ENCODE measurements at regions of chr4 and their contacts with region 1.

Region 1: GRCh38 chr4:42513748-42514492 is 116.6 kb downstream of the SHISA3 start:
- DNase-seq: no peak
- H3K4me3 ChIP-seq: no peak overlapping the region
- CTCF ChIP-seq: no peak
- POLR2A ChIP-seq: no peak

Region 2: DNA sequence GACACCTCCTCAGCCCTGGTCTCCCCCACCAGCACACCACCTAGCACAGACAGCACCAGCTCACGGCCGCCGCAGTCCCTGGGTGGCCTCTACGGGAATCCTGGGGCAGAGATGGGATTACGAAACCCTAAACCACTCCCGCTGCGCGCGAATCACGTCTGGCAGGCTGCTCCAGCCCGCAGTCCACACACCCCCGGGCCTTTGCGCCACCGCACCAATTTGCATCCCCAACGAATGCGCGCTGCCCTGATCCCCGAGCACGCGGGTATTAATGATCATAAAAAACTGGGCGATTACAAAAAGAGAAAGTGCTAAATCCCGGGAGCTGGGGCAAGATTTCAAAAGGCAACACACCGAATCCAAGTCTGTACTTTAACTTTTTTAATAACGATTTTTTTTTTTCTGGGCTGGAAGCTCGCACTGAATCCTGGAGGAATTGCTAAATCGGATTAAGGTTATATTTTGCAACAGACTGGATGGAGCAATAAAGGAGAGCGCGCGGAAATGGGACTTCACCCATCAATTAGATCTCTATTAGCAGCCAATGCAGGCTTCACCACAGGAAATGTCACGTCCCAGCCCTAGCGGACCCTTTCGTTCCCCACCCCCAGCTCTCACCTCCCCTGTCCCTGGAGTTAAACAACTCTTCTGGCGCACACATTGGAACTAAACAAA is 648.5 kb before region 1 on chr4:
- intact Hi-C with region 1: loop called (anchors 5 kb)
- DNase-seq: no peak
- H3K4me3 ChIP-seq: no peak overlapping the region
- CTCF ChIP-seq: no peak
- POLR2A ChIP-seq: no peak